Activated B cell treated with CpG ODN at 0.5 μM for 24 hours (primary cell): ENCODE measurements at regions of chr6 and their contacts with region 1.

Region 1: DNA sequence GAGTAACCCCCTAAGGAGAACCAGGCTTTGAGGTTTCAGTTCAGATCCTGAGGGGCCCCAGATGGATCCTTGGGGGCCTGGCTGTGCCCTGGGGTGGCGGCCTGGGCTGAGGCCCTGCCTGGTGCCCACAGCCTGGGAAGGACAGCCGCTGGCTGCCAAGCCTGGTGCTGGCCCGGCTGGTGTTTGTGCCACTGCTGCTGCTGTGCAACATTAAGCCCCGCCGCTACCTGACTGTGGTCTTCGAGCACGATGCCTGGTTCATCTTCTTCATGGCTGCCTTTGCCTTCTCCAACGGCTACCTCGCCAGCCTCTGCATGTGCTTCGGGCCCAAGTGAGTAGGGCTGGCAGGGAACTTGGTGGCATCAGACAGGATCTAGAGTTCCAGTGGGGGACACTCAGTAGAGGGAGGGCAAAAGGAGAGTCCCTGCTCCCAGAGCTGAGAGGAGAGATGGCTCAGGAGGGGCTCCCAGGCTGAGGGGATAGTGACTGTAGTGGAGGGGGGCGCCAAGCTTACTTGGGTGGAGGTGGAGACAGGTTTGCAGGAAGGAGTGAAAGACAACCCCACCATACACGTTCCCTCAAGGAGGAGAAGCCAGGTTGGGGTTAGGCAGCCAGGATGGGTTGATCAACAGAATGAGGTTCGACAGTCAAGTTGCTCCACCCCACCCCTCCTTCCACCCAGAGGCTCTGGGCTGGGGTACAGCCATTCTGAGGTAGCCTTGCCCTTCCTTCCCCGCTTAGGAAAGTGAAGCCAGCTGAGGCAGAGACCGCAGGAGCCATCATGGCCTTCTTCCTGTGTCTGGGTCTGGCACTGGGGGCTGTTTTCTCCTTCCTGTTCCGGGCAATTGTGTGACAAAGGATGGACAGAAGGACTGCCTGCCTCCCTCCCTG is 9.5 kb downstream of the SLC29A1 start:
- DNase-seq: no peak
- ATAC-seq: no peak
- H3K4me3 Mint-ChIP-seq: no peak overlapping the region
- H3K27ac Mint-ChIP-seq: no peak overlapping the region
- H3K4me1 Mint-ChIP-seq: peaks cover 10% of the 10 kb centered on the region
- H3K27me3 Mint-ChIP-seq: no peaks in the 10 kb centered on the region
- CTCF ChIP-seq: no peak

Region 2: GRCh38 chr6:42996513-42996912 is 1236.4 kb before region 1 on chr6:
- CTCF ChIA-PET with region 1: no interaction called
- POLR2A ChIA-PET with region 1: interaction called, 13 read pairs
- intact Hi-C with region 1: no loop called
- DNase-seq: no peak
- ATAC-seq: no peak
- H3K4me3 Mint-ChIP-seq: no peak overlapping the region
- H3K27ac Mint-ChIP-seq: no peak overlapping the region
- H3K4me1 Mint-ChIP-seq: peaks cover 2% of the 10 kb centered on the region
- H3K27me3 Mint-ChIP-seq: no peaks in the 10 kb centered on the region
- CTCF ChIP-seq: no peak

Region 3: DNA sequence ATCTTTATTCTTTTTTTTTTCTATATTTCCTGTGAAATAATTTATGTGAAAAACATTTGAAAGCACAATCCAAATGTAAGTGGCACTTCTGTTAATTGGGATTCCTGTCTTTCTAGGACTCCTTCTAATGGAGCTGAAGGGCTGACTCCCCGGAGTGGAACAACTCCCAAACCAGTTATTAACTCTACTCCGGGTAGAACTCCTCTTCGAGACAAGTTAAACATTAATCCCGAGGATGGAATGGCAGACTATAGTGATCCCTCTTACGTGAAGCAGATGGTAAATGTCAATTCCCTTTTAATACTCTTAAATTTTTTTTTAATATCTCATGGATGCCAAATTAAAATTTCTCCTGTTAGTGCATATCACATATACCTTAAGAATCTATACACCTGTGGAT is 189.6 kb after region 1 on chr6:
- CTCF ChIA-PET with region 1: no interaction called
- POLR2A ChIA-PET with region 1: no interaction called
- intact Hi-C with region 1: no loop called
- DNase-seq: no peak
- ATAC-seq: no peak
- H3K4me3 Mint-ChIP-seq: no peak overlapping the region
- H3K27ac Mint-ChIP-seq: no peak overlapping the region
- H3K4me1 Mint-ChIP-seq: no peaks in the 10 kb centered on the region
- H3K27me3 Mint-ChIP-seq: no peaks in the 10 kb centered on the region
- CTCF ChIP-seq: no peak